AG04450 (cell line): ENCODE measurements at regions of chr18 and their contacts with region 1.

Region 1: DNA sequence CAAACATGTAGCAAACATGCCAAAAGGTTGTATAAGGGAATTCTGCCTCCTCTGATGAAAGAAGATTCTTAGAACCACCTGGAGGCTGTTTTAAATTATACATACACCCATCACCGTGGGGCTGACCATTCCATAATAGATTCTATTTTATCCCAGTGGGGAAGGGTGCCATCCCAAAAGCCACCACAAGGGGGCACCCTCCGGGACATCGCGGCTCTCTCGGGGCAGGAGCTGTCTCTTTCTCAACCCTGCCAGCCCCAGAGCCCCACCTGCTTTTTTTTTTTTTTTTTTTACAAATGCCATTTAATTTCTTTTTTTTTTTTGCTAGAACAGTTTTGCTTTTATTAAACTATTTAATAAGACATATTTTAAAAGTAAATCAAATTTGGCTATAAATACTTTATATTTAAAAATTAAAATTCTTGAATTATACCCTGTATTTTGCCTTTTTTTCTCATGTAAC is 8.6 kb upstream of the MTCL1 start:
- DNase-seq: no peak
- H3K4me3 ChIP-seq: no peak overlapping the region
- H3K27ac ChIP-seq: no peak overlapping the region
- H3K27me3 ChIP-seq: no peaks in the 10 kb centered on the region
- CTCF ChIP-seq: peak; percentile 95

Region 2: GRCh38 chr18:8186413-8186812 is 510.4 kb before region 1 on chr18:
- CTCF ChIA-PET with region 1: no interaction called
- POLR2A ChIA-PET with region 1: no interaction called
- DNase-seq: no peak
- H3K4me3 ChIP-seq: no peak overlapping the region
- H3K27ac ChIP-seq: no peak overlapping the region
- H3K27me3 ChIP-seq: no peaks in the 10 kb centered on the region
- CTCF ChIP-seq: no peak

Region 3: GRCh38 chr18:8654503-8655451 is 42.0 kb before region 1 on chr18:
- CTCF ChIA-PET with region 1: interaction called, 22 read pairs
- POLR2A ChIA-PET with region 1: interaction called, 4 read pairs
- DNase-seq: no peak
- H3K4me3 ChIP-seq: no peak overlapping the region
- H3K27ac ChIP-seq: no peak overlapping the region
- H3K27me3 ChIP-seq: no peaks in the 10 kb centered on the region
- CTCF ChIP-seq: peak; percentile 76

Region 4: DNA sequence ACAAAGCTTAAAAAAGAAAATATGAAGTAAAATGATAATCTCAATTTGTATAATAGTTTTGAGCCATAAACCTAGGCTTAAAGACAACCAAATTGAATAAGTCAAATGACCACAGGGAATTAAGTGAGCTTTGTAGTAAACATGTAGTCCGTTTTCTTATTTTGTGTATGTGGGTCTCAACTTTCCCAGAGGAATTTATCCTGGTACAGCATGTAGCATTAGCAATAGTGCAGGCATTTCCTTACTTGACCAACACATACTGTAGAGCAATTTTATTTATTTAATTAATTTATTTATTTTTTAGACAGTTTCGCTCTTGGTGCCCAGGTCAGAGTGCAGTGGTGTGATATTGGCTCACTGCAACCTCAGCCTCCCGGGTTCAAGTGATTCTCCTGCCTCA is 28.9 kb before region 1 on chr18:
- CTCF ChIA-PET with region 1: interaction called, 25 read pairs
- POLR2A ChIA-PET with region 1: no interaction called
- DNase-seq: no peak
- H3K4me3 ChIP-seq: no peak overlapping the region
- H3K27ac ChIP-seq: no peak overlapping the region
- H3K27me3 ChIP-seq: no peaks in the 10 kb centered on the region
- CTCF ChIP-seq: no peak

Region 5: DNA sequence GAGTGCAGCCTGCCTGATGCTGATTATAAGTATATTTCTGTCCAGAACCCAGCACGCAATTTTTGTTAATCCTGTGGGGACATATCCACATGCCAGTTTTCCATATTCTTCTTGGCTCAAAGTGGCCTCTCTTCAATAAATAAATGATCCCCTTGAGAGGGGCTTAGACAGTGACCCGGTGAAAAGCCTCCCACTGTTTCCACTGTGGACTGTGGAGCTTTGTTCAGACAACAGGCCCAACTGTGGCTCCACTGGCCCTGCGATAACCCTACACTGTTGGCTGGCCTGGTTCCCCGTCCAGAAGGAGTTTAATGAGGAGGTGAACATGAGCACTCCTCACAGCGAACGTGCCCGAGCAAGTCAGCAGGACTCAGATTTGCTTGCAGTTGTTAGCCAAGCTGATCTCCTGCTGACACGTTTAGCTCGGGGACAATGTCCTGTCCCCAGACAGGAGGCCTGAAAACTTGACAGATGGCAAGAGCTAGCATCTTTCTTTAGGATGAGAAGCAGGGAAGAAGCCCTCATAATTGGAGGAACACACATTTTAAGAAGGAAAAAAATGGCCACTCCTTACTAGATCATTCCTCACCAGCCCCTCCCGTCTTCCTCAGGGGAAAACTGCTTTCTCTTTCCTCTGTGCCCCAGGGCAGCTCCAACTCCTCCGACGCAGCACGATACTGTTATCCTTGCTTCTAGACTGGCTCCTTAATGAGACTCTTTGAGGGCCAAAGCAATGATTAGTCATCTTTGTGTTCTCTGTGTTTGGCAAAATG is 11.5 kb before region 1 on chr18:
- CTCF ChIA-PET with region 1: interaction called, 45 read pairs
- POLR2A ChIA-PET with region 1: no interaction called
- DNase-seq: no peak
- H3K4me3 ChIP-seq: no peak overlapping the region
- H3K27ac ChIP-seq: no peak overlapping the region
- H3K27me3 ChIP-seq: no peaks in the 10 kb centered on the region
- CTCF ChIP-seq: no peak

Region 6: GRCh38 chr18:8717011-8717770 is 20.4 kb after region 1 on chr18:
- CTCF ChIA-PET with region 1: no interaction called
- POLR2A ChIA-PET with region 1: no interaction called
- DNase-seq: no peak
- H3K4me3 ChIP-seq: no peak overlapping the region
- H3K27ac ChIP-seq: no peak overlapping the region
- H3K27me3 ChIP-seq: no peaks in the 10 kb centered on the region
- CTCF ChIP-seq: no peak

Region 7: DNA sequence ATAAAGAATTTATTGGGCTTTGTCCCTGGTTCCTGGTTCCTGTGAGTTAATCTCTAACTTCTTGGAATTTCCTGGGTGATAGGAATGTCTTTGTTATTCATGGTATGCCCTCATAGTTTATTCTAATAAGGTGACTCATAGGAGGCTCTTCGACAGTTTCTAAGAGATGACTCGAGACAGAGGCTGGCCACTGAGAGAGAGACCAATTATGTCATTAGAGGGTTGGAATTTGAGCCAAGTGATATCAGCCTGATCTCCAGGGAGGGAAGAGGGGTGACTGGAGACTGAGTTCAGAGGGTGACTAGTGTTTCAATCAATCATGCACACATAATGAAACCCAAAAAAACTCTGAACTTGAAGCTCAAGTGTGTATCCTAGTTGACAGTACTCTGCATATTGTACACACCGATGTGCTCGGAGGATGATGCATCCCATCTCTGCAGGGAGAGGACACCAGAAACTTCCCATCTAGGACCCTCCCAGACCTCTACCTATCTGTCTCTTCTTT is 194.2 kb after region 1 on chr18:
- CTCF ChIA-PET with region 1: no interaction called
- POLR2A ChIA-PET with region 1: no interaction called
- DNase-seq: peak; percentile 82
- H3K4me3 ChIP-seq: no peak overlapping the region
- H3K27ac ChIP-seq: peak overlapping the region; percentile 86
- H3K27me3 ChIP-seq: no peaks in the 10 kb centered on the region
- CTCF ChIP-seq: no peak

Region 8: GRCh38 chr18:8988261-8988871 is 291.6 kb after region 1 on chr18:
- CTCF ChIA-PET with region 1: interaction called, 50 read pairs
- POLR2A ChIA-PET with region 1: no interaction called
- DNase-seq: no peak
- H3K4me3 ChIP-seq: no peak overlapping the region
- H3K27ac ChIP-seq: no peak overlapping the region
- H3K27me3 ChIP-seq: no peaks in the 10 kb centered on the region
- CTCF ChIP-seq: peak; percentile 90

Region 9: GRCh38 chr18:9987931-9988330 is 1291.2 kb after region 1 on chr18:
- CTCF ChIA-PET with region 1: no interaction called
- POLR2A ChIA-PET with region 1: no interaction called
- DNase-seq: no peak
- H3K4me3 ChIP-seq: no peak overlapping the region
- H3K27ac ChIP-seq: no peak overlapping the region
- H3K27me3 ChIP-seq: peaks cover 35% of the 10 kb centered on the region
- CTCF ChIP-seq: no peak